HepG2 (cell line): ENCODE measurements at regions of chr14 and their contacts with region 1.

Region 1: DNA sequence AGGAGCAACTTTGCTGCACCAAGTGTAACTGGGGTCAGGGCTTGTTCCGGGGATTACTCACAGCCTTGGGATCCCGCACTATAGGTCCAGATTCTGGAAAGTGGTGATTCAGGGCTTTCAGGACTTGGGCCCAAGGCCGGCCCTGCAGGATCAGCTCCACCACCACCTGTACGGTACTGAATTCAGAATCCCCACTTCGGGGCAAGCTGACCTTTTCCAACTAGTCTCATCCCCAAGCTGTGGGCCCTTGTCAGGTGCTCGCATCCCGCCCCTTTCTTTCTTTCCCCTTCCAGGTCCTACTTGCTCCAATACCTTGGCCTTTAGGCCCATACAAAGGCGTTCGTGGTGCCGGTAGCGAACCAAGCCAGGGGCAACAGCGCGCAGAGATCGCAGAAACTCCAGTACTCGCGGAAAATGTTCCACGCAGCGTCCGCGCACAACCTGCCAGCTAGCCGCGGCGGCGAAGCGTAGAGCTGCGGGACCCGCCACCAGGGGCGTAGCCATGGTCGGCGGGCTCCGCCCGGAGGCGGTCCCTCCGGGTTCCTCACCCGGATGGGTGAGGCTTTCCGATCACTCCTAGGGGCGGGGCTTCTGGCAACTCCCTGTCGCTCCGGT is 487 bp downstream of the TINF2 start:
- DNase-seq: peak; percentile 97
- ATAC-seq: peak; percentile 91
- H3K4me3 ChIP-seq: peak overlapping the region; percentile 64 to 81 (median 71)
- H3K27ac ChIP-seq: peak overlapping the region; percentile 91
- H3K4me1 ChIP-seq: peaks cover 47% of the 10 kb centered on the region
- H3K27me3 ChIP-seq: no peaks in the 10 kb centered on the region; a peak in 1 of 5 replicates
- CTCF ChIP-seq: peak; percentile 62
- EP300 ChIP-seq: peak in 1 of 2 experiments; percentile 86; a peak in 2 of 4 replicates
- POLR2A ChIP-seq: no peak
- RAD21 ChIP-seq: 0 out of 2 replicates have a peak, but pooled peaks have one; percentile 30

Region 2: GRCh38 chr14:24135834-24136542 is 105.9 kb before region 1 on chr14 and contains the start of gene PSME1:
- CTCF ChIA-PET with region 1: no interaction called
- POLR2A ChIA-PET with region 1: interaction called, 27 read pairs
- in situ Hi-C with region 1: no loop called
- intact Hi-C with region 1: no loop called
- DNase-seq: peak; percentile 93
- ATAC-seq: peak; percentile 86
- H3K4me3 ChIP-seq: peak within 1 kb of the TSS; percentile 91 to 98 (median 93)
- H3K27ac ChIP-seq: peak within 1 kb of the TSS; percentile 75
- H3K4me1 ChIP-seq: peaks cover 64% of the 10 kb centered on the region
- H3K27me3 ChIP-seq: no peaks in the 10 kb centered on the region; a peak in 1 of 5 replicates
- CTCF ChIP-seq: peak; percentile 47; the same call in 1 of the 2 replicates
- EP300 ChIP-seq: peak; percentile 23 to 43; a peak in 1 of 4 replicates
- POLR2A ChIP-seq: peak in 1 of 2 experiments; percentile 31; a peak in 1 of 4 replicates
- RAD21 ChIP-seq: peak; percentile 71
- total RNA-seq, gene PSME1: 608 and 713 TPM in 2 replicates

Region 3: DNA sequence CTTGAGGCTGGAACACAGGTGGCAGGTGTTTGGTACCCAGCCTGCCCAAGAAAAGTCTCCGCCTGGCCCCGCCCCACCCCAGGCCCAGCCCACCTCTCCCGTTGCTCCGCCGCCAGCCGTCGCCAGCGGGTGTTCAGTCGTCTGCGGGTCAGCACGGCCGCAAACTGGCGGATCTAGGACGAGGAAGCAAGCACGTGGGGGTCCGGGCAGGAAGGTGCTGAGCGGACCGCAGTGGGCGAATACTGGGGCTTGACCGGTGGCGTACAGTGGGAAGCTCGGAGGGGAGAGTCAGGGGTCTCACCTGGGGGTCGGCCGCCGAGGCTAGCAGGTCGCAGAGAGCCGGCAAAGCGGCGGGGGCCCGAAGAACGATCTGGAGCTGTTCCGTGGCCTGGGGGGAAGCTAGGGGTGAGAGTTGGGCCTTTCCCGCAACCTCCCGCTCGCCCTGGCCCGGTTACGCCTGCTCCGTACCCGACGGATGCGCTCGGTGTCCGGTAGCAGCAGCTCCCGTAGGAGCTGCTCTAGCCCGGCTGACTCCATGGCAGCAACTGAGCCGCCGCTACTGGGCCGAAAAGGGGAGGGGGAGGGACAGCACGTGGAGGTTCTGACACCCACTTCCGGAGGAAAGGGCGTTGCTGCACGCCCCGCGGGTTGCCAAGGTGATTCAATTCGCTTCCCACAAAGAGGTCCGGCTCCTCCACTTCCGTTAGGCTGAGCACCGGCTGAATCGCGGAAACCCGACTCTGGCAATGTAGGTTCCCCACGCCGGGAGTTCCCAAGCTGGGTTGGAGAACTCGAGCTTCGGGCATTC is 53.5 kb before region 1 on chr14 and contains the start of gene IPO4:
- CTCF ChIA-PET with region 1: no interaction called
- POLR2A ChIA-PET with region 1: interaction called, 29 read pairs
- in situ Hi-C with region 1: no loop called
- intact Hi-C with region 1: loop called (anchors 2 kb)
- DNase-seq: peak; percentile 100
- ATAC-seq: peak; percentile 88
- H3K4me3 ChIP-seq: peak within 1 kb of the TSS; percentile 70 to 92 (median 77)
- H3K27ac ChIP-seq: peak within 1 kb of the TSS; percentile 64
- H3K4me1 ChIP-seq: peaks cover 42% of the 10 kb centered on the region
- H3K27me3 ChIP-seq: no peaks in the 10 kb centered on the region
- CTCF ChIP-seq: peak; percentile 49
- EP300 ChIP-seq: peak; percentile 85 to 87; a peak in 3 of 4 replicates
- POLR2A ChIP-seq: peak in 1 of 2 experiments; percentile 98; a peak in 2 of 4 replicates
- RAD21 ChIP-seq: peak; percentile 77
- total RNA-seq, gene IPO4: 149 and 179 TPM in 2 replicates

Region 4: GRCh38 chr14:24259252-24259995 is 17.5 kb after region 1 on chr14:
- CTCF ChIA-PET with region 1: no interaction called
- POLR2A ChIA-PET with region 1: interaction called, 435 read pairs
- in situ Hi-C with region 1: no loop called
- intact Hi-C with region 1: no loop called
- DNase-seq: no peak
- ATAC-seq: no peak
- H3K4me3 ChIP-seq: no peak overlapping the region
- H3K27ac ChIP-seq: no peak overlapping the region
- H3K4me1 ChIP-seq: peaks cover 33% of the 10 kb centered on the region
- H3K27me3 ChIP-seq: no peaks in the 10 kb centered on the region
- CTCF ChIP-seq: no peak
- EP300 ChIP-seq: no peak
- POLR2A ChIP-seq: no peak
- RAD21 ChIP-seq: no peak

Region 5: DNA sequence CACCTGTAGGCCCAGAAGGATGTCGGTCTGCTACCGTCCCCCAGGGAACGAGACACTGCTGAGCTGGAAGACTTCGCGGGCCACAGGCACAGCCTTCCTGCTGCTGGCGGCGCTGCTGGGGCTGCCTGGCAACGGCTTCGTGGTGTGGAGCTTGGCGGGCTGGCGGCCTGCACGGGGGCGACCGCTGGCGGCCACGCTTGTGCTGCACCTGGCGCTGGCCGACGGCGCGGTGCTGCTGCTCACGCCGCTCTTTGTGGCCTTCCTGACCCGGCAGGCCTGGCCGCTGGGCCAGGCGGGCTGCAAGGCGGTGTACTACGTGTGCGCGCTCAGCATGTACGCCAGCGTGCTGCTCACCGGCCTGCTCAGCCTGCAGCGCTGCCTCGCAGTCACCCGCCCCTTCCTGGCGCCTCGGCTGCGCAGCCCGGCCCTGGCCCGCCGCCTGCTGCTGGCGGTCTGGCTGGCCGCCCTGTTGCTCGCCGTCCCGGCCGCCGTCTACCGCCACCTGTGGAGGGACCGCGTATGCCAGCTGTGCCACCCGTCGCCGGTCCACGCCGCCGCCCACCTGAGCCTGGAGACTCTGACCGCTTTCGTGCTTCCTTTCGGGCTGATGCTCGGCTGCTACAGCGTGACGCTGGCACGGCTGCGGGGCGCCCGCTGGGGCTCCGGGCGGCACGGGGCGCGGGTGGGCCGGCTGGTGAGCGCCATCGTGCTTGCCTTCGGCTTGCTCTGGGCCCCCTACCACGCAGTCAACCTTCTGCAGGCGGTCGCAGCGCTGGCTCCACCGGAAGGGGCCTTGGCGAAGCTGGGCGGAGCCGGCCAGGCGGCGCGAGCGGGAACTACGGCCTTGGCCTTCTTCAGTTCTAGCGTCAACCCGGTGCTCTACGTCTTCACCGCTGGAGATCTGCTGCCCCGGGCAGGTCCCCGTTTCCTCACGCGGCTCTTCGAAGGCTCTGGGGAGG is 69.0 kb after region 1 on chr14 and contains the start of gene LTB4R:
- CTCF ChIA-PET with region 1: interaction called, 19 read pairs
- POLR2A ChIA-PET with region 1: interaction called, 850 read pairs
- in situ Hi-C with region 1: no loop called
- intact Hi-C with region 1: loop called (anchors 2 kb)
- DNase-seq: no peak
- ATAC-seq: no peak
- H3K4me3 ChIP-seq: no peak within 1 kb of the TSS
- H3K27ac ChIP-seq: peak within 1 kb of the TSS; percentile 4
- H3K4me1 ChIP-seq: peaks cover 61% of the 10 kb centered on the region
- H3K27me3 ChIP-seq: no peaks in the 10 kb centered on the region; a peak in 1 of 5 replicates
- CTCF ChIP-seq: no peak
- EP300 ChIP-seq: no peak
- POLR2A ChIP-seq: no peak
- RAD21 ChIP-seq: no peak
- total RNA-seq, gene LTB4R: 1.00 and 3.2 TPM in 2 replicates

Region 6: GRCh38 chr14:24431569-24432258 is 189.8 kb after region 1 on chr14:
- CTCF ChIA-PET with region 1: interaction called, 4 read pairs
- POLR2A ChIA-PET with region 1: interaction called, 33 read pairs
- in situ Hi-C with region 1: loop called (anchors 10 kb)
- intact Hi-C with region 1: loop called (anchors 2 kb)
- DNase-seq: peak; percentile 97
- ATAC-seq: peak; percentile 66
- H3K4me3 ChIP-seq: peak overlapping the region in 2 of 3 experiments; percentile 80 to 82; a peak in 4 of 6 replicates
- H3K27ac ChIP-seq: no peak overlapping the region
- H3K4me1 ChIP-seq: peaks cover 52% of the 10 kb centered on the region
- H3K27me3 ChIP-seq: no peaks in the 10 kb centered on the region; a peak in 1 of 5 replicates
- CTCF ChIP-seq: peak; percentile 100
- EP300 ChIP-seq: 0 out of 4 replicates have a peak, but pooled peaks of 1 of the 2 experiments have one; percentile 45
- POLR2A ChIP-seq: peak in 1 of 2 experiments; percentile 21; a peak in 2 of 4 replicates
- RAD21 ChIP-seq: peak; percentile 100